ENCODE measurements at regions of chr17 and their contacts with region 1.

Region 1: DNA sequence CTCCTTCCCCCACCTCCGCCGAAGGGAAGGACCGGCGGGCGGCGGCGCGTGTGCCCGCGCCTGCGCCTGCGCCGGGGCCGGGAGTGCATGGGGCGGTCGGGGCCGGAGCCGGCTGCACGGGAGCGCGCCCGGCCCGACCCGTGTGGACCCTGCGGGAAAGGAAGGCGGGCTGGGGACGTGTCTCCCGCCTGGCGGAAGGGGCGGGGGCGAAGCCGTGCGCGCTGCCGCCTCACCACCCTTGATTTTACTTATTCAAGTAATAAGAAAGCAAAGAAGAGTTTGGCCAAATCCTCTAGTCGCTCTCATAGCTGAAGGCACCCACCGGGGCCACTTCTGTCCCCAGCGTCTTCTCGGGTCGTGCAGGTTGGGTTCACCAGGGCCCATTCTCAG is 596 bp upstream of the PFN1 start:
- DNase-seq: peak in 8 of 10 donors; percentile 58 to 85 (median 67)
- ATAC-seq: peak; percentile 41 to 47
- H3K4me3 Mint-ChIP-seq: peak overlapping the region; percentile 91 to 100 (median 98)
- H3K27ac Mint-ChIP-seq: peak overlapping the region; percentile 77 to 100 (median 95)
- H3K4me1 Mint-ChIP-seq: peaks cover 37 to 49% (median 43%) of the 10 kb centered on the region in 4 donors
- H3K27me3 Mint-ChIP-seq: no peaks in the 10 kb centered on the region

Region 2: GRCh38 chr17:4852567-4853207 is 96.2 kb before region 1 on chr17:
- POLR2A ChIA-PET with region 1: no interaction called
- DNase-seq: peak in 7 of 10 donors; percentile 15 to 48 (median 40)
- ATAC-seq: peak; percentile 66 to 75
- H3K4me3 Mint-ChIP-seq: peak overlapping the region in 5 of 10 donors; percentile 0 to 55 (median 5)
- H3K27ac Mint-ChIP-seq: peak overlapping the region in 8 of 10 donors; percentile 7 to 94 (median 59)
- H3K4me1 Mint-ChIP-seq: peaks cover 33 to 65% (median 38%) of the 10 kb centered on the region in 4 donors
- H3K27me3 Mint-ChIP-seq: no peaks in the 10 kb centered on the region

Region 3: GRCh38 chr17:4903051-4903818 is 45.7 kb before region 1 on chr17 and contains the start of gene CHRNE:
- POLR2A ChIA-PET with region 1: interaction called, 17 read pairs
- DNase-seq: peak; percentile 51 to 88 (median 76)
- ATAC-seq: peak; percentile 26 to 27
- H3K4me3 Mint-ChIP-seq: peak within 1 kb of the TSS; percentile 40 to 86 (median 72)
- H3K27ac Mint-ChIP-seq: peak within 1 kb of the TSS; percentile 27 to 99 (median 84)
- H3K4me1 Mint-ChIP-seq: peaks cover 26 to 45% (median 41%) of the 10 kb centered on the region in 4 donors
- H3K27me3 Mint-ChIP-seq: peaks cover 0 to 2% (median 0%) of the 10 kb centered on the region in 5 donors
- polyA plus RNA-seq, gene CHRNE: 0.19 to 0.58 (median 0.20) TPM

Region 4: GRCh38 chr17:4908301-4908700 is 40.6 kb before region 1 on chr17:
- POLR2A ChIA-PET with region 1: interaction called, 13 read pairs
- DNase-seq: peak in 1 of 10 donors; percentile 25
- ATAC-seq: peak in 1 of 2 donors; percentile 26
- H3K4me3 Mint-ChIP-seq: no peak overlapping the region
- H3K27ac Mint-ChIP-seq: no peak overlapping the region
- H3K4me1 Mint-ChIP-seq: peaks cover 3 to 10% (median 5%) of the 10 kb centered on the region in 4 donors
- H3K27me3 Mint-ChIP-seq: no peaks in the 10 kb centered on the region

Region 5: GRCh38 chr17:4986951-4987766 is 38.2 kb after region 1 on chr17 and contains the start of gene CAMTA2:
- POLR2A ChIA-PET with region 1: interaction called, 12 read pairs
- DNase-seq: peak; percentile 81 to 93 (median 84)
- ATAC-seq: peak; percentile 89
- H3K4me3 Mint-ChIP-seq: peak within 1 kb of the TSS; percentile 83 to 97 (median 91)
- H3K27ac Mint-ChIP-seq: peak within 1 kb of the TSS; percentile 85 to 97 (median 95)
- H3K4me1 Mint-ChIP-seq: peaks cover 30 to 49% (median 42%) of the 10 kb centered on the region in 4 donors
- H3K27me3 Mint-ChIP-seq: no peaks in the 10 kb centered on the region
- polyA plus RNA-seq, gene CAMTA2: 4.1 to 18.9 (median 6.3) TPM

Region 6: GRCh38 chr17:4997302-4998026 is 48.5 kb after region 1 on chr17 and contains the starts of genes INCA1 and KIF1C:
- POLR2A ChIA-PET with region 1: interaction called, 21 read pairs
- DNase-seq: peak; percentile 82 to 96 (median 90)
- ATAC-seq: peak; percentile 91 to 95
- H3K4me3 Mint-ChIP-seq: peak within 1 kb of the TSS; percentile 76 to 91 (median 84)
- H3K27ac Mint-ChIP-seq: peak within 1 kb of the TSS; percentile 66 to 95 (median 86)
- H3K4me1 Mint-ChIP-seq: peaks cover 17 to 29% (median 20%) of the 10 kb centered on the region in 4 donors
- H3K27me3 Mint-ChIP-seq: no peaks in the 10 kb centered on the region
- polyA plus RNA-seq, gene INCA1: 0.23 TPM in 1 of 3 donors, not detected in the others
- polyA plus RNA-seq, gene KIF1C: 2.6 to 3.0 (median 3.0) TPM